Activated CD4-positive, alpha-beta T cell treated with anti-CD3 and anti-CD28 coated beads, Interleukin-2, amount 10 ng/mL, durations not matched to agents 7 days and 5 days (primary cell): ENCODE measurements at regions of chr3 and their contacts with region 1.

Region 1: DNA sequence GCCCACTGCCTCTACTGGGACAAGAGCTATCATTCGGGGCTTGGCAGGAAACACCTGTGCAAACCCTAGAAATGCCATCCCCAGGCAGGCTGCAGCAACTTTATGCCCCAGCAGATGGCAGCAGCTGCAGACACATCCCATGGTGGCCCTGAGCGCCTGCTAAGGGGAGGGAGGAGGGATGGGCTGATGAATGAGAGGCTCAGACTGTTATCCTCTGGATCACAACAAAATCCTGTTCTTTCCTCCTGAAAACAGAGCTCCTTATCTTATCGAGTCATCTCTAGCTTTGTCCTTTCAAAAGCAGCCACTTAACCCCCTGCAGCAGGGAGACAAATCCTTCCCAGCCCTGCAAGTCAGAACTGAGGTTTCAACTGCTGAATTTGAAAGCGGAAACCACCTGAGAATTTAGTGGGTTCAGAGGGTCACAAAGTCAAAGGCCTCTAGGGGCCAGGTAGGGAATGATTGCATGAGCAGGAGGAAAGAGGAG is 90.6 kb upstream of the PROK2 start:
- DNase-seq: peak; percentile 82
- H3K4me3 Mint-ChIP-seq: no peak overlapping the region
- H3K27ac Mint-ChIP-seq: peak overlapping the region; percentile 11
- H3K4me1 Mint-ChIP-seq: peaks cover 25% of the 10 kb centered on the region
- H3K27me3 Mint-ChIP-seq: peaks cover 3% of the 10 kb centered on the region

Region 2: DNA sequence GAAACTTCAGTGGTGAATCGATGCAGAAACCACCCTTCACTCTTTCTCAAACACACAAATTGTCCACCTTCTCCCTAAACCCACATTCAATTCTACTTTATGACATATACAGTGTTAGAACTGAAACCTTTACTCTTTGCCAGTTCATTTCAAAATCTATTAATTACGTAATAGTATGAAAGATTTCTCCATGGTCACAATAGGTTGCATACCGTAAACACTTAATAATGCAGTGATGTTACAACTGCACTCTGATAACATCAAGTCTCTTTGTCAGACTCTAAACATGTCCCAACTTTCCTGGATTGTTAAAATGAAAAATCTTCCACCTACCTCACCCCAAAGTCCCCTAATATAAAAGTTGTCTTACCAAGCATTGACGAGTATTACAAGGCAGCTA is 21.2 kb after region 1 on chr3:
- CTCF ChIA-PET with region 1: interaction called, 13 read pairs
- POLR2A ChIA-PET with region 1: no interaction called
- DNase-seq: no peak
- H3K4me3 Mint-ChIP-seq: no peak overlapping the region
- H3K27ac Mint-ChIP-seq: no peak overlapping the region
- H3K4me1 Mint-ChIP-seq: no peaks in the 10 kb centered on the region
- H3K27me3 Mint-ChIP-seq: peaks cover 8% of the 10 kb centered on the region

Region 3: GRCh38 chr3:72818092-72818773 is 942.7 kb after region 1 on chr3:
- CTCF ChIA-PET with region 1: interaction called, 10 read pairs
- POLR2A ChIA-PET with region 1: no interaction called
- DNase-seq: no peak
- H3K4me3 Mint-ChIP-seq: no peak overlapping the region
- H3K27ac Mint-ChIP-seq: no peak overlapping the region
- H3K4me1 Mint-ChIP-seq: peaks cover 15% of the 10 kb centered on the region
- H3K27me3 Mint-ChIP-seq: no peaks in the 10 kb centered on the region